Activated naive CD4-positive, alpha-beta T cell treated with anti-CD3 and anti-CD28 coated beads, Interleukin-2, amount 10 ng/mL, durations not matched to agents 7 days and 5 days (primary cell): ENCODE measurements at regions of chr10 and their contacts with region 1.

Region 1: DNA sequence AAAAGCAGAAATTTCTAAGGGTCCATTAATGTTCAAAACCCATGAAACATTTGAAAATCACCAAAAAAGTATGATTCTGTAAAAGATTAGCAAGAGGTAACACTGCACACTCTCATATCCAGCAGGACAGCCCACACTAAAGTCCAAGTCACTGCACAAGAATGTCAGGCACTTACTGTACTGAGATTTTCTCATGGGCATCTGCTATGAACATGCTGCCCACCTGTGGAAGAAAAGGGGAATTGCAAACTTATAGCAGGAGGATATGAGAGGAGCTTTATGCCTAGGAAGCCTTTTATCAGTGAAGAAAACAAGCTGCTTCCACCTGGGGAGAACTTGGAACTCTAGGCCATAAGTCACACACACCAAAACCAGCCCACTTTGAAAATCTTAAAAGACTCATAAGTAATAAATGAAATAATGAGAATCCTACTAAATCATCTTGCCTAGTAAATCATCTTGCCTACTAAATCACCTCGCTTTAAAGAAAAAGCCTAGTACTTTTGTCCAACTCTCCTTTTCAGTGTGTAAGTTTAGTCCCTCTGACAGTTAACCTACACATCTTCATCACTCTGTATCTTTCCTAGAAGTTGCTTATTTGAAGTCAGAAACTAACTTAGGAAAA is 46.1 kb downstream of the ARMH3 start:
- DNase-seq: peak; percentile 53
- H3K4me3 Mint-ChIP-seq: no peak overlapping the region
- H3K27ac Mint-ChIP-seq: no peak overlapping the region
- H3K4me1 Mint-ChIP-seq: no peaks in the 10 kb centered on the region
- H3K27me3 Mint-ChIP-seq: no peaks in the 10 kb centered on the region

Region 2: GRCh38 chr10:101830322-101831168 is 179.4 kb before region 1 on chr10:
- CTCF ChIA-PET with region 1: interaction called, 40 read pairs
- DNase-seq: peak; percentile 95
- H3K4me3 Mint-ChIP-seq: peak overlapping the region; percentile 74
- H3K27ac Mint-ChIP-seq: peak overlapping the region; percentile 96
- H3K4me1 Mint-ChIP-seq: peaks cover 62% of the 10 kb centered on the region
- H3K27me3 Mint-ChIP-seq: peaks cover 4% of the 10 kb centered on the region

Region 3: DNA sequence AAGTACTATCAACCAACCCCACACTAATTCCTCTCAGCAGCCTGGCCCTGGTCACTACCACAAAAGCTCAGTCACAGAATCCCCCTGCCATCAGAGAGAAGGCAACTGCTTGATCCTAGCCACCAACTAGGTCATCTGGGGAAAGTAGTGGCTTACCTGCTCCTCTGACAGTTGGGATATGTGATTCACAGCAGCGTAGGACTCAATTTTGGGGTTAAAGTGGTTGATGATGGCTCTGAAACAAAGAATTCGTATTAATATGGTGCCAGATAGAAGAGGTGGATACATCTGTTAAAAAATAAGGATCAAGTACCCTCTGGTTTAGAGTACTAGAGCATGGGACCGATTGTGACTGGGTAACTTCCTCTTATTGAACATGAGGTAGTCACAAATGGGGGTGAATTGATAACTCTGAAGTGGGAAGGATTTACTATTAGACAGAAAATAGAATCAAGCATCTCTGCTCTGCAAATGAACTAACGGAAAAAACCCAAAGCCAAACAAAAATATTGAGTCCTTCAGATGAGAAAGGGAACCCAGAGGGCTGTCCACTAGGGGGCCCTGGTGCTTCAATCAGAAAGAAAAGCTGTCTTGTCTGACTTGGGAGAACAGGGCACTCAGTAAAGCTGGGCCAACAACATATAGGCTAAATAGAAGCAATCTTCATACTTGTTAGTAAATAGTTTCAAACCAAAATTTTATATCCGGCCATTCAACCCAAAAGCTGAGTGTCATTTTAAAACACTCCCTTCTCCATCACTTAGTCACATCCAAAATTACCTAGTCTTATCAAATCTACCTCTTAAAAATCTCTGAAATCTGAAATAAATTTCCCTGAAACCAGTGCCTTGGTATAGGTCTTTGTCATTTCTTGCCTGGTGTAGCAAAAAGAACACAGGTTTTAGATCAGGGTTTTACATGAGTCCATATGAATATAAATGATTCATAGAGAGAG is 120.4 kb before region 1 on chr10:
- CTCF ChIA-PET with region 1: interaction called, 101 read pairs
- DNase-seq: peak; percentile 85
- H3K4me3 Mint-ChIP-seq: no peak overlapping the region
- H3K27ac Mint-ChIP-seq: no peak overlapping the region
- H3K4me1 Mint-ChIP-seq: no peaks in the 10 kb centered on the region
- H3K27me3 Mint-ChIP-seq: no peaks in the 10 kb centered on the region

Region 4: DNA sequence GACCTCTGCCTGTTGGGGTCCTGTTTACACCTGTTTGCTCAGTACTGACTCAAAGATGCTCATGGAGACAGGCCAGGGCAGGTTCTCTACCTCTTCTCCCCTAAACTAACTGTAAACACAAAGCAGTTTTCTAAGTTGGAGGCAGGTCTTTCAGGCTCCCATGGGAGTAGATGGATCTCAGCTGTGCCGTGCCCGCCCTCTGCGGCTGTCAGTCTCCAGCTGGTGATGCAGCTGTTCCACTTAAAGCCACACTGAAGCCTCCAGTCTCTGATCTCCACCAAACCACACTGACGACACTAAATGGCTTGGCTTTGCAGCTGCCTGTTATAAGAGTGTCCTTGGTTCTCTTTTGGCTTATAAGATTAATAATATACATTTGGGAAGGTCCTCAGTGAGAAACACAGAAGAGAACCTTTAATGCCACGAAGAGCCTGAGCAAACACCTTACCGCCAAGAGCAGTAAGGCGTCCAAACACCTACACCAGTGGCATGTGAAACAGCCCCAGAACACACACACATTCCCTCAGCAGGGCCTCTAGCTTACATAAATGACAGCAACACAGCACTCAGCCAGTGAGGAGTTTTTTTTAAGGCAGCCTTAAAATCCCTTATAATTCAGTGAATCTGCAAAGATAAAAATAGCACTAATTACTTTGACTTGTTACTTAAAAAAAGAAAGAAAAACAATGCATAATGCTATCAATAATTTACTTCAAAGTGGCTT is 105.9 kb before region 1 on chr10:
- CTCF ChIA-PET with region 1: interaction called, 12 read pairs
- DNase-seq: peak; percentile 30
- H3K4me3 Mint-ChIP-seq: no peak overlapping the region
- H3K27ac Mint-ChIP-seq: no peak overlapping the region
- H3K4me1 Mint-ChIP-seq: peaks cover 14% of the 10 kb centered on the region
- H3K27me3 Mint-ChIP-seq: no peaks in the 10 kb centered on the region

Region 5: GRCh38 chr10:102072673-102073527 is 63.0 kb after region 1 on chr10:
- CTCF ChIA-PET with region 1: interaction called, 16 read pairs
- DNase-seq: peak; percentile 89
- H3K4me3 Mint-ChIP-seq: no peak overlapping the region
- H3K27ac Mint-ChIP-seq: no peak overlapping the region
- H3K4me1 Mint-ChIP-seq: no peaks in the 10 kb centered on the region
- H3K27me3 Mint-ChIP-seq: peaks cover 3% of the 10 kb centered on the region